ENCODE measurements at regions of chr6 and their contacts with region 1.

Region 1: GRCh38 chr6:43769526-43770416 is at the start of gene VEGFA:
- DNase-seq: peak; percentile 92
- H3K4me3 ChIP-seq: peak within 1 kb of the TSS; percentile 68 to 88 (median 83)
- H3K27ac ChIP-seq: peak within 1 kb of the TSS; percentile 96 to 99 (median 96)
- H3K4me1 ChIP-seq: peaks cover 7 to 67% (median 51%) of the 10 kb centered on the region in 4 donors
- H3K27me3 ChIP-seq: no peaks in the 10 kb centered on the region
- CTCF ChIP-seq: peak; percentile 97 to 99 (median 99)
- EP300 ChIP-seq: no peak
- POLR2A ChIP-seq: peak; percentile 94
- total RNA-seq, gene VEGFA: 131 to 608 (median 203) TPM

Region 2: GRCh38 chr6:43667245-43668150 is 102.3 kb before region 1 on chr6:
- in situ Hi-C with region 1: loop called in 3 of 4 experiments (anchors 10 to 25 kb)
- intact Hi-C with region 1: no loop called
- DNase-seq: peak; percentile 93
- H3K4me3 ChIP-seq: peak overlapping the region in 1 of 4 donors; percentile 7
- H3K27ac ChIP-seq: peak overlapping the region in 2 of 4 donors; percentile 39 to 40
- H3K4me1 ChIP-seq: peaks cover 12 to 45% (median 33%) of the 10 kb centered on the region in 4 donors
- H3K27me3 ChIP-seq: no peaks in the 10 kb centered on the region
- CTCF ChIP-seq: peak; percentile 93 to 98 (median 95)
- EP300 ChIP-seq: no peak
- POLR2A ChIP-seq: peak; percentile 40

Region 3: DNA sequence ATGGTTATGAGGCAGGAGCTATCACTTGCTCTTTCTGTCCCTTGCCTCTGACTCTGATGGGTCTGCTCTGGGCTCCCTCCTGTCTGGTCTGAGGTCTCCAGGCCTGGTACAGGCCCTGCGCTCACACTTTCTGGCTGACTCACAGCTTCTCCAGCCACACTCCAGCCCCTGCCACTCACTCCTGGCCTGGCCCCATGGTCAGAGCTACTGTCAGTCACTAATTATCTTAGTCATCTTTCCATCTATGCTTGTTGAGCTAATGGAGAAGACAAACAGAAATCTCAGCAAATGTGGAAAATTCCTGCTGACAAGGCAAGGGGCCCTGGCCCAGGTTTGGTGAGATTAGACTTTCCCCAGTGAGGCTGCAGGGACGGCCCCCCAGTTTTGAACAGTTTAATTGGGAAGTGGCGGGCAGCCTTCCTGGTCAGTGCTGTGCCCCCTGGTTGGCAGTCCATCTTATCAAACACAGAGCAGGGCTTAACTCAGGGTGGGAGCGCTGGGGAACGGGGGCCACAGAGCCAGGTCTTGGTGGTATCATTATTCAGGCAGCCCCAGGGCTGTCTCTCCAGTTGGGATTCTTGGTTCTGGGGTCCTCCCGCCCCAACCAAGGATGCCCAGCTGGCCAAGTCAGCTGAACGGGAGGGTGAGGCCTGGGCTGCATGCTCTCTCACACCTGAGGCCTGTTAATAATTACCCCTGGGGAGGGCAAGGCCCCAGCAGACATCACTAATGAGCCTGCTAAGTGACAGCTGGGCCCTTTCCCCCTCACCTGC is 63.6 kb after region 1 on chr6:
- in situ Hi-C with region 1: no loop called
- intact Hi-C with region 1: no loop called
- DNase-seq: no peak
- H3K4me3 ChIP-seq: no peak overlapping the region
- H3K27ac ChIP-seq: no peak overlapping the region
- H3K4me1 ChIP-seq: peaks cover 4 to 12% (median 9%) of the 10 kb centered on the region in 4 donors
- H3K27me3 ChIP-seq: no peaks in the 10 kb centered on the region
- CTCF ChIP-seq: no peak
- EP300 ChIP-seq: no peak
- POLR2A ChIP-seq: no peak

Region 4: GRCh38 chr6:43951063-43951755 is 181.4 kb after region 1 on chr6:
- in situ Hi-C with region 1: loop called in 1 of 4 experiments (anchors 10 kb)
- intact Hi-C with region 1: no loop called
- DNase-seq: peak; percentile 75
- H3K4me3 ChIP-seq: no peak overlapping the region
- H3K27ac ChIP-seq: no peak overlapping the region
- H3K4me1 ChIP-seq: no peaks in the 10 kb centered on the region
- H3K27me3 ChIP-seq: no peaks in the 10 kb centered on the region
- CTCF ChIP-seq: peak; percentile 39 to 90 (median 57)
- EP300 ChIP-seq: no peak
- POLR2A ChIP-seq: no peak

Region 5: DNA sequence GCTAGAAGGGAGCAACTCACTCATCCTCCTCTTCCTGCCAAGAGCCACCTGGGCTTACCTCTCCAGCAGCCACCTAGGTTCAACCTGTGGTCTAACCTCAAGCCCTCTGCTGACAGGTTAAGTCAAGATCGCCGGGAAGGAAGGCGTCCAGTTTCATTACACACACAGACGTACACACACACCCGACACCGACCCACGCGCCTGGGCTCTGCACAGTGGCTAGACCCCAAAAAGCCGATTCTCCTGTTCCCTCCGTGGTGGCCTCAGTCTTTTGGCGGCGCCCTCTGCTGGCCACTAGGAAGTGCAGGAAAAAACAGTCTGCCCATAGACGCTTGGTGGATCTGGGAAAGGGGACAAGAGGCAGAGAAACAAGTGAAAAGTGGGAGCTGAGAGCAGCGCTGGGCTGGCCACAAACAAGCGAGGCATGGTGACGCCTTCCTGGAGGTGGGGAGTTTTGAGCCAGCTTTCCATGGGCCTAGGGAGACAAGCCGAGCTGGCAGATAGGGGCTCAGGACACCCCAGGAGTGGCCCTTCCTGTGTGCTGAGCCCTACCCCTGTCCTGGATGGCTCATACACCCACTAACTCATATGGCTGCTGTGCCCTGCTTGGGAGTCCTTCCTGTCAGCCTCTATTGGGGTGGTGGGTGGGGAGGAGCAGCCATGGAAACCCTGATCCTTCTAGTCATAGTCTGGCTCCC is 304.8 kb after region 1 on chr6:
- in situ Hi-C with region 1: loop called in 2 of 4 experiments (anchors 5 to 10 kb)
- intact Hi-C with region 1: loop called (anchors 1 kb)
- DNase-seq: peak; percentile 64
- H3K4me3 ChIP-seq: peak overlapping the region in 1 of 4 donors; percentile 54
- H3K27ac ChIP-seq: peak overlapping the region in 3 of 4 donors; percentile 75 to 82 (median 78)
- H3K4me1 ChIP-seq: peaks cover 15 to 62% (median 40%) of the 10 kb centered on the region in 4 donors
- H3K27me3 ChIP-seq: peaks cover 3% of the 10 kb centered on the region
- CTCF ChIP-seq: peak; percentile 86 to 94 (median 88)
- EP300 ChIP-seq: no peak
- POLR2A ChIP-seq: no peak

Region 6: DNA sequence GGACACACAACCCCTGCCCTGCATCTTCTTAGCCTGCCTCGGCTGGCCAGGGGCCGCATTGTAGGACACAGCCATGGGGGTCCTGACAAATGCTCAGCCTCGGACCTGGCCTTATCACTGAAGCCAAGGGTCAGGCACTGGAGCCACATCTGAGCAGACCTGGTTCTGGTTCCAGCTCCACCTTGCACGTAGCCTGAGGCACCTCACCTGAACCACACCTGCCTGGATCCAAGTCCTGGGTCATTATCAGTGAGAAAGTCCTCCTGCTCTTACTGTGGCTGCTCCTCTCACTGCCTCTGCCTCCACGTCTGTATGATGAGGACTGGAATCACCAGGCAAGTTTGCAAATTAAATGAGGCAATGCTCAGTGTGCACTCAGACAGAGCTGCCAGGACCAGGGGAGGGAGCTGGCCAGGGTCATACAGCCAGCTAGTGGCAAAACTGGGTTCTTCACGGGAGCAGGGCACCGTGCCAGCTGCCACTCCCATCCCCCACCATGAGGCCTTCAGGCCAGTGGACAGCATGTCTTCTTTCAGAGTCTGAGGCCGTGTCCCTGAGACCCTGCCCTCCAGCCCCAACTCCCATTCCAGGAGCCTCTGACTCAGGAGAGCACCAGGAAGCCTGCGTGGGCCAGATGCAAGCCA is 317.3 kb after region 1 on chr6:
- in situ Hi-C with region 1: loop called in 2 of 4 experiments (anchors 10 kb)
- intact Hi-C with region 1: no loop called
- DNase-seq: no peak
- H3K4me3 ChIP-seq: no peak overlapping the region
- H3K27ac ChIP-seq: no peak overlapping the region
- H3K4me1 ChIP-seq: no peaks in the 10 kb centered on the region
- H3K27me3 ChIP-seq: no peaks in the 10 kb centered on the region
- CTCF ChIP-seq: no peak
- EP300 ChIP-seq: no peak
- POLR2A ChIP-seq: no peak

Region 7: GRCh38 chr6:44151348-44152108 is 381.8 kb after region 1 on chr6:
- in situ Hi-C with region 1: no loop called
- intact Hi-C with region 1: loop called (anchors 5 kb)
- DNase-seq: peak; percentile 79
- H3K4me3 ChIP-seq: no peak overlapping the region
- H3K27ac ChIP-seq: no peak overlapping the region
- H3K4me1 ChIP-seq: peaks cover 1 to 6% (median 4%) of the 10 kb centered on the region in 4 donors
- H3K27me3 ChIP-seq: no peaks in the 10 kb centered on the region
- CTCF ChIP-seq: peak; percentile 98 to 100 (median 99)
- EP300 ChIP-seq: no peak
- POLR2A ChIP-seq: no peak